ENCODE measurements at regions of chrX and their contacts with region 1.

Region 1: GRCh38 chrX:133670383-133670782 is 255.1 kb upstream of the GPC4 start:
- DNase-seq: peak in 1 of 2 experiments; percentile 7
- H3K4me3 ChIP-seq: no peak overlapping the region
- H3K4me3 Mint-ChIP-seq: no peak overlapping the region
- H3K27ac Mint-ChIP-seq: no peak overlapping the region
- H3K4me1 ChIP-seq: no peaks in the 10 kb centered on the region
- H3K4me1 Mint-ChIP-seq: peaks cover 8% of the 10 kb centered on the region
- H3K27me3 ChIP-seq: no peaks in the 10 kb centered on the region
- H3K27me3 Mint-ChIP-seq: no peaks in the 10 kb centered on the region
- CTCF ChIP-seq: peak; percentile 32 to 39

Region 2: GRCh38 chrX:133335027-133335426 is 335.4 kb before region 1 on chrX:
- CTCF ChIA-PET with region 1: interaction called, 7 read pairs
- POLR2A ChIA-PET with region 1: no interaction called
- intact Hi-C with region 1: loop called (anchors 1 kb)
- DNase-seq: peak in 1 of 2 experiments; percentile 29
- H3K4me3 ChIP-seq: no peak overlapping the region
- H3K4me3 Mint-ChIP-seq: no peak overlapping the region
- H3K27ac Mint-ChIP-seq: no peak overlapping the region
- H3K4me1 ChIP-seq: 0 out of 2 replicates have a peak, but pooled peaks cover 11% of the 10 kb centered on the region
- H3K4me1 Mint-ChIP-seq: peaks cover 12% of the 10 kb centered on the region
- H3K27me3 ChIP-seq: no peaks in the 10 kb centered on the region
- H3K27me3 Mint-ChIP-seq: no peaks in the 10 kb centered on the region
- CTCF ChIP-seq: peak in 1 of 2 experiments; percentile 30

Region 3: GRCh38 chrX:133468046-133468445 is 202.3 kb before region 1 on chrX:
- CTCF ChIA-PET with region 1: interaction called, 3 read pairs
- POLR2A ChIA-PET with region 1: no interaction called
- intact Hi-C with region 1: loop called (anchors 2 kb)
- DNase-seq: peak in 1 of 2 experiments; percentile 4
- H3K4me3 ChIP-seq: no peak overlapping the region
- H3K4me3 Mint-ChIP-seq: no peak overlapping the region
- H3K27ac Mint-ChIP-seq: no peak overlapping the region
- H3K4me1 ChIP-seq: no peaks in the 10 kb centered on the region
- H3K4me1 Mint-ChIP-seq: no peaks in the 10 kb centered on the region
- H3K27me3 ChIP-seq: no peaks in the 10 kb centered on the region
- H3K27me3 Mint-ChIP-seq: peaks cover 7% of the 10 kb centered on the region
- CTCF ChIP-seq: no peak

Region 4: GRCh38 chrX:133645977-133646718 is 24.2 kb before region 1 on chrX:
- CTCF ChIA-PET with region 1: no interaction called
- POLR2A ChIA-PET with region 1: no interaction called
- intact Hi-C with region 1: no loop called
- DNase-seq: no peak
- H3K4me3 ChIP-seq: no peak overlapping the region
- H3K4me3 Mint-ChIP-seq: no peak overlapping the region
- H3K27ac Mint-ChIP-seq: no peak overlapping the region
- H3K4me1 ChIP-seq: no peaks in the 10 kb centered on the region
- H3K4me1 Mint-ChIP-seq: no peaks in the 10 kb centered on the region
- H3K27me3 ChIP-seq: no peaks in the 10 kb centered on the region
- H3K27me3 Mint-ChIP-seq: no peaks in the 10 kb centered on the region
- CTCF ChIP-seq: no peak